ENCODE measurements at regions of chr10 and their contacts with region 1.

Region 1: GRCh38 chr10:96043033-96043932 is at the start of gene CCNJ:
- DNase-seq: peak; percentile 84
- ATAC-seq: peak; percentile 95
- H3K4me3 ChIP-seq: peak within 1 kb of the TSS; percentile 89 to 91 (median 90)
- H3K27ac ChIP-seq: peak within 1 kb of the TSS; percentile 87
- H3K4me1 ChIP-seq: peaks cover 36% of the 10 kb centered on the region
- H3K27me3 ChIP-seq: no peaks in the 10 kb centered on the region; a peak in 1 of 5 replicates
- CTCF ChIP-seq: peak; percentile 41; the same call in 1 of the 2 replicates
- EP300 ChIP-seq: 0 out of 4 replicates have a peak, but pooled peaks of 1 of the 2 experiments have one; percentile 27
- POLR2A ChIP-seq: peak; percentile 80 to 87
- RAD21 ChIP-seq: peak; percentile 54
- total RNA-seq, gene CCNJ: 21.5 and 33.9 TPM in 2 replicates

Region 2: DNA sequence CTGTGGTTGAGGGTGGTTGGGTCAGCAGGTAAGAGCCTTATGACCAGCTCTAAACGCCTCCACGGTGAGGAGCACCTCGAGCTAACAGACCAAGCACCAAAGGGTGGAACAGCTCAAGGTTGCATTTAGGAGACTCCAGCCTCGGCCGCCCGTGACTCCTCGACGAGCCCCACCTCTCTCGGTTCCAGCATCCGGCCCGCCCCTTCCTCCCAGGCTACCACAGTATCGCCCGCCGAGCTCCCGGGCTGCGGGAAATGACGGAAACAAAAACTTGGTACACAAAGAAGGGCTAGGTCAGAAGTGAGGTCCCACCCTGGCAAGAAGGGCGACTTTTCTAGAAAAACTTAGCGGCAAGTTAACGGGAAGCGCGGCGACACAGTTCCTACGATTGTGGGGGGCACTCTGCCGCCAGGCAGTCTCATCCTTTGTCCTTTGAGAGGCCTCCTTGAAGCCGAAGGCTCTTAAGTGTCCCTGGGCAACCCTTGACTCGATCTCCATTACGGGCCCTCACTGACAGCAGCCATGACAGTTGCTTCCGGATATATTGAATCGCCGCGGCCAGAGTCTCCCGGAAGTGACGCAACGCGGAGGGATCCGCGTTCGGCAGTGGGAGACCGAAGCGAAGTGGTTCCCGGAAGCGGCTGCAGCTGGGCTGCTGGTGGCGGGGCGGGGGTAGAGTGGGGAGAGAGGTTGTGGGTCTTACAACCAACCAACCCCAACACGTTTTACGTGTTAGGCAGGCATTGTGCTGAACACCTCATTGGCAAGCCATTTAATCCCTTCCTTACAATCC is 46.6 kb after region 1 on chr10:
- CTCF ChIA-PET with region 1: no interaction called
- POLR2A ChIA-PET with region 1: interaction called, 17 read pairs
- in situ Hi-C with region 1: no loop called
- intact Hi-C with region 1: loop called (anchors 5 kb)
- DNase-seq: peak; percentile 93
- ATAC-seq: peak; percentile 89
- H3K4me3 ChIP-seq: peak overlapping the region; percentile 60 to 90 (median 88)
- H3K27ac ChIP-seq: peak overlapping the region; percentile 100
- H3K4me1 ChIP-seq: peaks cover 60% of the 10 kb centered on the region
- H3K27me3 ChIP-seq: no peaks in the 10 kb centered on the region; a peak in 1 of 5 replicates
- CTCF ChIP-seq: 0 out of 2 replicates have a peak, but pooled peaks have one; percentile 22
- EP300 ChIP-seq: peak; percentile 39 to 57; a peak in 3 of 4 replicates
- POLR2A ChIP-seq: peak; percentile 71 to 78
- RAD21 ChIP-seq: peak; percentile 48

Region 3: DNA sequence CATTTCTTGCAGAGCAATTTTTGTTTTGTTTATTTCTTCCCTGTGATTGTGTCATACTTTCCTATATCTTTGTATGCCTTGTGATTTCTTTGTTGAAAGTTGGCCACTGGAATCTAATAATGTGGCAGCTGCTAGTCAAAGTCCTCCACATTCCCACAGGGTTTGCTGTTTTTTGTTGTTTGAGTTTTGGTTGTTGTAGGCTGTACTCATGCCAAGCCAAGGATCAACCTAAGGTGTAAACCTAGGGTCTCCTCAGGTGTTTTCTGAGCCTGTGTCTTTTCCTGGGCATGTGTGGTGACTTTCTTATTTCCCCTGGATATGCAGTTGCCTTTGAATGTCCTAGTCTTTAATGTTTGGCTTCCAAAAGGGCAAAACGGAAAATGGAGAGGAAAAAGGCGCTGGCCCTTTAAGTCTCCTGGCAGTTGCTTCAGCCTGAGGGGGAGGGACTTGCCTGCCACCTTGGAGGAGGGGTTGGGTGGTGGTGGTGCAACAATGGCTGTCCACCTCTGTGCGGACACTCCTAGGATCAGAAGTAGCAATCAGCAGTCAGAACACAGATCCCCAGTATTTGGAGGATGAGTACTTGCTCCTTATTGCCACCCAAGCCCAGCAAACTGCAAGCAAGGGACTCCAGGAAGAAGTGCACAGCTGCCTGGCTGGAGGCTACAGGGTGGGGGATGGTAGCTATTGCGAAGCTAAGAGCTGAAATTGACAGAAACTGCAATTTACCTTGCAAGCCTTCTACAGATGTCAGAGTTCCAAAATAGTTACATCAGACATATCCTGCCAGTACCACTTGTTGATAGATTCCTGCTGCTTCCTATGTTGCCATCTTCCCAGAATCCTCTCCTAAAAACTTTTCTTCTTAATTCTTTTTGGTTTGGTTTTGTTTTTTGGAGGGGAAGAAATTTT is 81.2 kb after region 1 on chr10:
- CTCF ChIA-PET with region 1: no interaction called
- POLR2A ChIA-PET with region 1: interaction called, 32 read pairs
- in situ Hi-C with region 1: no loop called
- intact Hi-C with region 1: no loop called
- DNase-seq: peak; percentile 74
- ATAC-seq: peak; percentile 98
- H3K4me3 ChIP-seq: peak overlapping the region; percentile 64 to 81 (median 66)
- H3K27ac ChIP-seq: peak overlapping the region; percentile 93
- H3K4me1 ChIP-seq: peaks cover 35% of the 10 kb centered on the region
- H3K27me3 ChIP-seq: no peaks in the 10 kb centered on the region; a peak in 1 of 5 replicates
- CTCF ChIP-seq: no peak
- EP300 ChIP-seq: no peak
- POLR2A ChIP-seq: peak; percentile 67 to 78
- RAD21 ChIP-seq: peak; percentile 13; the same call in 1 of the 2 replicates

Region 4: DNA sequence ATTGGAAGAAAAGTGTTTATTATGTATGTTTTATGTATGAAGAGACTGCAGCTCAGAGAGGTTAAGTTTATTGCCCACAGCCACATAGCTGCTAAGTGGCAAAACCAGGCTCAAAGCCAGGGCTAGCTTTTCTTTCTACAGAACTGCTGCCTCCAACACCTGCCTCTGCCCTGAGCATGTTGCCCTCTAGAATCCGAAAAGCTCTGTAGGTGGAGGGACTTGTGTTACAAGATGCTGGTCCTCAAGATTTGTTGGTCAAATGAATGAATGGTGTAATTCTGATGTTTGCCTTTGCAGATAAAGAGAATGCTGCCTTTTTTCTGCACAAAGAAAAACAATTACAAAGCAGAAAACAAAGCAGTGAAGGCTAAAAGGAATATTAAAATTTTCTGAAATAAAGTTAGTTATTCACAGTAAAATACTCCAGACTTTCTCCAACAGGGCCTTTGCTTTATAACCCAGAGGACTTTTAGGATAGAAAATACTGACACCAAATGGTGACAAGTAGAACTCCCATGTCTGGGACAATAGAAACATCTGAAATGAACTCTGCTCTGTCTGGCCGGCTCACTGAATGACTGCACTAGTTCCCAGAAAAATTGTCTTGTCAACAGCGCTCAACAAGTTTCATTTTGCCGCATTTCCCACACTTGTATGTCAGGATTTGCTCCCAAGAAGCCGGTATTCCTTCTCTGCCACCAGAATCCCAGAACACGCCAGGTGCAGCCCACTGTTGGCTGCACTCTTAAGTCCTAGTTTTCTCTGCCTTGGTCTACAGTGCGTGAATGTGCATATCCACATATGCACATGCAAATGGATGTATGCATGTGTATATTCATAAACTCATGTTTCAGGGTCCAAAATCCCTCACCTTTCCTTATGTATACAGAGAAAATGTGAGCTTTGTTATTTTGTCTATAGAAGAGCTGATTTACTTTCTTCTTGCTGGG is 250.0 kb after region 1 on chr10:
- CTCF ChIA-PET with region 1: no interaction called
- POLR2A ChIA-PET with region 1: no interaction called
- in situ Hi-C with region 1: no loop called
- intact Hi-C with region 1: loop called (anchors 1 kb)
- DNase-seq: peak; percentile 70
- ATAC-seq: peak; percentile 99
- H3K4me3 ChIP-seq: peak overlapping the region in 1 of 3 experiments; percentile 58; a peak in 2 of 6 replicates
- H3K27ac ChIP-seq: no peak overlapping the region
- H3K4me1 ChIP-seq: peaks cover 8% of the 10 kb centered on the region
- H3K27me3 ChIP-seq: peaks cover 0 to 16% of the 10 kb centered on the region in 2 experiments; a peak in 3 of 5 replicates
- CTCF ChIP-seq: peak; percentile 76
- EP300 ChIP-seq: no peak
- POLR2A ChIP-seq: no peak
- RAD21 ChIP-seq: peak; percentile 66; the same call in 1 of the 2 replicates

Region 5: GRCh38 chr10:96513698-96514561 is 470.6 kb after region 1 on chr10 and contains the start of gene TLL2:
- CTCF ChIA-PET with region 1: no interaction called
- POLR2A ChIA-PET with region 1: no interaction called
- in situ Hi-C with region 1: no loop called
- intact Hi-C with region 1: no loop called
- DNase-seq: peak; percentile 75
- ATAC-seq: peak; percentile 91
- H3K4me3 ChIP-seq: peak within 1 kb of the TSS; percentile 55 to 71 (median 57)
- H3K27ac ChIP-seq: no peak within 1 kb of the TSS
- H3K4me1 ChIP-seq: peaks cover 35% of the 10 kb centered on the region
- H3K27me3 ChIP-seq: peaks cover 0 to 26% of the 10 kb centered on the region in 2 experiments; a peak in 4 of 5 replicates
- CTCF ChIP-seq: peak; percentile 82
- EP300 ChIP-seq: no peak
- POLR2A ChIP-seq: no peak
- RAD21 ChIP-seq: peak; percentile 80
- total RNA-seq, gene TLL2: 0.09 TPM in 1 of 2 replicates, not detected in the other